HCT116 (cell line): ENCODE measurements at regions of chr3 and their contacts with region 1.

Region 1: DNA sequence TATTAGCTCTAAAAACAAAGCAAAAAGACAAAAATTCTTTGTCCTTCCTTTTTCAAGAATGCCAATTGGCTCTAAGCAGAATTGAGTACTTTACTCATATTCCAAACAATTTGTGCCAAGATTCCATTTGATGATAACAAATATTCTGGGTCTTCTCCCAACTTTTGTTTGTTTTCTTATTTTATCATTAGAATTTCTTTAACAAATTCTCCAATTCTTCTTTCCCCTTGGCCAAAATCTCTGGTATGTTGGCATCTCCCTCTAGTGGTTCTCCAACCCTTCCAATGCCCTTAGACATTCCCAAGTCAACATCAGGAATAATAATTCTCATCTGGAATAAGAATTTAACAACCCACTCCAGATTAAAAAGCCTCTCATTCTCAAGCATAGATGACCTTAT is 5.3 kb downstream of the CPOX start:
- DNase-seq: no peak
- ATAC-seq: no peak
- H3K4me3 ChIP-seq: no peak overlapping the region
- H3K27ac ChIP-seq: peak overlapping the region; percentile 93; the same call in 1 of the 2 replicates
- H3K4me1 ChIP-seq: peaks cover 75 to 91% of the 10 kb centered on the region in 2 experiments
- H3K27me3 ChIP-seq: no peaks in the 10 kb centered on the region
- CTCF ChIP-seq: peak; percentile 37 to 70 (median 64); a peak in 5 of 6 replicates
- POLR2A ChIP-seq: no peak
- RAD21 ChIP-seq: peak; percentile 64

Region 2: GRCh38 chr3:98039322-98040024 is 548.6 kb before region 1 on chr3:
- CTCF ChIA-PET with region 1: no interaction called
- POLR2A ChIA-PET with region 1: no interaction called
- RAD21 ChIA-PET with region 1: no interaction called
- intact Hi-C with region 1: loop called (anchors 5 kb)
- DNase-seq: peak; percentile 89
- ATAC-seq: peak; percentile 91
- H3K4me3 ChIP-seq: peak overlapping the region; percentile 26 to 49
- H3K27ac ChIP-seq: no peak overlapping the region
- H3K4me1 ChIP-seq: peaks cover 0 to 8% of the 10 kb centered on the region in 2 experiments; a peak in 2 of 4 replicates
- H3K27me3 ChIP-seq: no peaks in the 10 kb centered on the region
- CTCF ChIP-seq: peak; percentile 77 to 97 (median 92)
- POLR2A ChIP-seq: no peak
- RAD21 ChIP-seq: peak; percentile 81